Aorta (tissue), 5 donors: ENCODE measurements at regions of chr10 and their contacts with region 1.

Region 1: GRCh38 chr10:73940634-73941221 is 29.8 kb downstream of the PLAU start:
- DNase-seq: peak; percentile 92 to 97
- ATAC-seq: peak; percentile 96
- H3K4me3 ChIP-seq: no peak overlapping the region
- H3K27ac ChIP-seq: peak overlapping the region; percentile 22 to 59
- H3K4me1 ChIP-seq: no peaks in the 10 kb centered on the region
- H3K27me3 ChIP-seq: no peaks in the 10 kb centered on the region

Region 2: DNA sequence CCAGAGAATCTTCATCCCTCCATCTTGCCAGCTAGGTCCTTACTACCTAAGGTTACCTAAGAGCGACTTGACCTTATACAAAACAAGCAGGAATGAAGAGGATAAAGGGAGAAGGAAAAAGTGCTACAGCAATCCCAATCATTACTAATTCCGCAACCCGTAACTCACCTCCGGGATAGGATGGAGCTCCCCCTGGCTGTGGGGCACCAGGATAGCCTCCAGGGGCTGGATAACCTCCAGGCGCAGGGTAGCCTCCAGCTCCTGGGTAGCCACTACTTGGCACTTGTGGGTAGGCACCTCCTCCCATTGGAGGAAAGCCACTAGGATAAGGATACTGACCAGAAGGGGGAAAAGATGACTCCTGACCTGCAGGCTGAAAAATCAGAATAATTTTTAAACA is 542.7 kb before region 1 on chr10:
- intact Hi-C with region 1: no loop called
- DNase-seq: no peak
- ATAC-seq: no peak
- H3K4me3 ChIP-seq: no peak overlapping the region
- H3K27ac ChIP-seq: no peak overlapping the region
- H3K4me1 ChIP-seq: no peaks in the 10 kb centered on the region
- H3K27me3 ChIP-seq: no peaks in the 10 kb centered on the region

Region 3: DNA sequence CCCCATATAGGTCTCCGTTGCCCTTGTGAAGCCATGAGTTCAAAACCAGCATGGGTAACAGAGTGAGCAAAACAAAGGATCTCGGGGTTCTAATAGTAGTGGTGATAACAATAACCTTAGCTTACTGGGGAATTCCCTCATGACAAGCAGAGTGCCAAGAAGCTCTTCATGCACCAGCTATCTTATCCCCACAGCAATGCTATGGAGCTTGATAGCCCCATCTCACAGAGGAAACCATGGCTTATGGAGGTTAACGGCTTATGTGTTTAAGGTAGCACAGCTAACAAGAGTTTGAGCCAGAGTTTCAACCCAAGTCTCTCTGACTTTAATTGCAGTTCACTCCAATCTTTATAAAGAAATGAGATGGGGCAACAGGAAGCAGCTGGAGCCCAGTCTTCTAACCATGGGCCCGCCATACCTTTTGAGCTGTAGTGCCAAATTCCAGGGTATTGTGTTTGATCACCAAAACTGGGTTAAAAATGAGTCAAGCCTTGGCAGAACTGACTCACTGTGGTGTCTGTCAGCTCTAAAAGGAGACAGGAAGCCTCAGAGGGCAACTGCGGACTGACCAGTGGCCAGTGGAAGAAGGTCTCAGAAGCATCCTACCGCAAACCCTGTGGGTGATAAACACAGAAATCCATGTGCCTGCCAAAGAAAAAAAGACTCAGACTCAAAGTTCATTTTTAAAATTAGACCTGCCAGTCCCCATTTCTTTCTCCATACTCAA is 46.3 kb before region 1 on chr10:
- intact Hi-C with region 1: no loop called
- DNase-seq: peak in 1 of 2 donors; percentile 46
- ATAC-seq: no peak
- H3K4me3 ChIP-seq: no peak overlapping the region
- H3K27ac ChIP-seq: no peak overlapping the region
- H3K4me1 ChIP-seq: no peaks in the 10 kb centered on the region
- H3K27me3 ChIP-seq: no peaks in the 10 kb centered on the region

Region 4: DNA sequence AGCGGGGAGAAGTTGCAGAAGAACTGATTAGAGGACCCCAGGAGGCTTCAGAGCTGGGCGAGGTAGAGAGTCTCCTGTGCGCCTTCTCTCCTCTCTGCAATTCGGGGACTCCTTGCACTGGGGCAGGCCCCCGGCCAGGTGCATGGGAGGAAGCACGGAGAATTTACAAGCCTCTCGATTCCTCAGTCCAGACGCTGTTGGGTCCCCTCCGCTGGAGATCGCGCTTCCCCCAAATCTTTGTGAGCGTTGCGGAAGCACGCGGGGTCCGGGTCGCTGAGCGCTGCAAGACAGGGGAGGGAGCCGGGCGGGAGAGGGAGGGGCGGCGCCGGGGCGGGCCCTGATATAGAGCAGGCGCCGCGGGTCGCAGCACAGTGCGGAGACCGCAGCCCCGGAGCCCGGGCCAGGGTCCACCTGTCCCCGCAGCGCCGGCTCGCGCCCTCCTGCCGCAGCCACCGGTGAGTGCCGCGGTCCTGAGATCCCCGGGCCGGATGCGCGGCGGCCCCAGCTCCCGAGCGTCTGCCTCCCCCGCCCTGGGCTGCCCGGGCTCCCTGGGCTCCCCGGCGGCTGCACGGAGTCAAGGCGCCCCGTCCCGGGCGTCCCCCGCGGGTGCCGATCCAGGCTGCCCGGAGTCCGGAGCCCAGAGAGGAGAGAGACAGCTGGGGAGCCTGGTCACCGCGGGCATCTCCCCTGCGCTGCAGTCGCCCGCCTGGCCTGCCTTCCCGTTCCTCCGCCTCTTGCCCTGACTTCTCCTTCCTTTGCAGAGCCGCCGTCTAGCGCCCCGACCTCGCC is 29.8 kb before region 1 on chr10 and contains the start of gene PLAU:
- intact Hi-C with region 1: loop called in 1 of 2 experiments (anchors 2 kb)
- DNase-seq: peak; percentile 82 to 84
- ATAC-seq: peak; percentile 38
- H3K4me3 ChIP-seq: peak within 1 kb of the TSS; percentile 50 to 62
- H3K27ac ChIP-seq: no peak within 1 kb of the TSS
- H3K4me1 ChIP-seq: no peaks in the 10 kb centered on the region
- H3K27me3 ChIP-seq: no peaks in the 10 kb centered on the region
- total RNA-seq, gene PLAU: 33.6 to 35.4 TPM

Region 5: GRCh38 chr10:74363727-74364126 is 423.0 kb after region 1 on chr10:
- intact Hi-C with region 1: no loop called
- DNase-seq: no peak
- ATAC-seq: no peak
- H3K4me3 ChIP-seq: no peak overlapping the region
- H3K27ac ChIP-seq: no peak overlapping the region
- H3K4me1 ChIP-seq: peaks cover 0 to 2% of the 10 kb centered on the region in 2 donors
- H3K27me3 ChIP-seq: no peaks in the 10 kb centered on the region